K562 (cell line): ENCODE measurements at regions of chr1 and their contacts with region 1.

Region 1: GRCh38 chr1:169711469-169712281 is at the start of gene SELL:
- DNase-seq: peak; percentile 51 to 69 (median 62)
- ATAC-seq: peak; percentile 98
- H3K4me3 ChIP-seq: no peak within 1 kb of the TSS
- H3K27ac ChIP-seq: no peak within 1 kb of the TSS
- H3K4me1 ChIP-seq: no peaks in the 10 kb centered on the region
- H3K27me3 ChIP-seq: no peaks in the 10 kb centered on the region
- CTCF ChIP-seq: peak; percentile 77 to 82 (median 78)
- EP300 ChIP-seq: no peak
- POLR2A ChIP-seq: no peak
- RAD21 ChIP-seq: peak; percentile 77 to 78
- polyA plus RNA-seq, gene SELL: not detected

Region 2: DNA sequence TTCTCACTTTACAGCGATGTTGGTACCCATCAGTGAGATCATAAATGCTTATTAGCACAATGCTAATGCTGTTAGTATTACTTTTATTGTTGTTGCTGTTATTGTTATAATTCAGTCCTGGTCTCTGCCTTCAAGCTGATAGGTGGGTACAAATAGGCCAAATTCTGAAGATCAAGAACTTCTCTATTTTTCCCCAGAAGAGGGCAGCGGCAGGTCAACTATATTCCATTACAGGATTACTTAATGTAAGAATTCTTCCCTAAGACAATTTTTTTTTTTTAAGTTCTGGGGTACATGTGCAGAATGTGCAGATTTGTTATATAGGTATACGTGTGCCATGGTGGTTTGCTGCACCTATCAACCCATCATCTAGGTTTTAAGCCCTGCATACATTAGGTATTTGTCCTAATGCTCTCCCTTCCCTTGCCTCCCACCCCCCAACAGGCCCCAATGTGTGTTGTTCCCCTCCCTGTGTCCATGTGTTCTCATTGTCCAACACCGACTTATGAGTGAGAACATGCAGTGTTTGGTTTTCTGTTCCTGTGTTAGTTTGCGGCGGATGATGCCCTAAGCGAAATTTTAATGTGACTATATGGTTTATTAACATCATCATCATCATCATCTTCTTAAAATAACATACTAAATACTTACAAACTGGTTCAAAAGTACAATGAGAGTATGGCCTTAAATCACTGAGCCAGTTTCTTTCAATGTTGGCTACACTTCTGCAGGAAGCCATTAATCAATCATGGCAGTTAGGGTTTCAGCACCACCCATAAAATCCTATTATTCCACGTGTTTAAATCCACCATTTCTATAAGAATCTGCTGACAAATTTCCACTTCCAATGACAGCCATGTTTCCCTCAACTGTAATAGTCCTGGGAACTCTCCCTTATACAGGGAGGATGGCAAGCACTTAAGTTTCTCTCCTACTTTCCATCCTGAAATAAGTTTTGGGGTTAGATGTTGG is 245.1 kb before region 1 on chr1:
- CTCF ChIA-PET with region 1: interaction called, 5 read pairs
- POLR2A ChIA-PET with region 1: no interaction called
- in situ Hi-C with region 1: no loop called
- intact Hi-C with region 1: loop called (anchors 10 kb)
- DNase-seq: peak in 3 of 4 experiments; percentile 34 to 53 (median 42)
- ATAC-seq: peak; percentile 79
- H3K4me3 ChIP-seq: no peak overlapping the region
- H3K27ac ChIP-seq: no peak overlapping the region
- H3K4me1 ChIP-seq: no peaks in the 10 kb centered on the region
- H3K27me3 ChIP-seq: no peaks in the 10 kb centered on the region
- CTCF ChIP-seq: peak; percentile 39 to 66 (median 47); a peak in 5 of 6 replicates
- EP300 ChIP-seq: no peak
- POLR2A ChIP-seq: no peak
- RAD21 ChIP-seq: peak; percentile 70 to 79

Region 3: GRCh38 chr1:169513208-169513607 is 198.5 kb before region 1 on chr1:
- CTCF ChIA-PET with region 1: no interaction called
- POLR2A ChIA-PET with region 1: no interaction called
- in situ Hi-C with region 1: no loop called
- intact Hi-C with region 1: no loop called
- DNase-seq: no peak
- ATAC-seq: no peak
- H3K4me3 ChIP-seq: no peak overlapping the region
- H3K27ac ChIP-seq: no peak overlapping the region
- H3K4me1 ChIP-seq: peaks cover 0 to 10% of the 10 kb centered on the region in 2 experiments; a peak in 2 of 5 replicates
- H3K27me3 ChIP-seq: no peaks in the 10 kb centered on the region
- CTCF ChIP-seq: no peak
- EP300 ChIP-seq: no peak
- POLR2A ChIP-seq: no peak
- RAD21 ChIP-seq: no peak

Region 4: DNA sequence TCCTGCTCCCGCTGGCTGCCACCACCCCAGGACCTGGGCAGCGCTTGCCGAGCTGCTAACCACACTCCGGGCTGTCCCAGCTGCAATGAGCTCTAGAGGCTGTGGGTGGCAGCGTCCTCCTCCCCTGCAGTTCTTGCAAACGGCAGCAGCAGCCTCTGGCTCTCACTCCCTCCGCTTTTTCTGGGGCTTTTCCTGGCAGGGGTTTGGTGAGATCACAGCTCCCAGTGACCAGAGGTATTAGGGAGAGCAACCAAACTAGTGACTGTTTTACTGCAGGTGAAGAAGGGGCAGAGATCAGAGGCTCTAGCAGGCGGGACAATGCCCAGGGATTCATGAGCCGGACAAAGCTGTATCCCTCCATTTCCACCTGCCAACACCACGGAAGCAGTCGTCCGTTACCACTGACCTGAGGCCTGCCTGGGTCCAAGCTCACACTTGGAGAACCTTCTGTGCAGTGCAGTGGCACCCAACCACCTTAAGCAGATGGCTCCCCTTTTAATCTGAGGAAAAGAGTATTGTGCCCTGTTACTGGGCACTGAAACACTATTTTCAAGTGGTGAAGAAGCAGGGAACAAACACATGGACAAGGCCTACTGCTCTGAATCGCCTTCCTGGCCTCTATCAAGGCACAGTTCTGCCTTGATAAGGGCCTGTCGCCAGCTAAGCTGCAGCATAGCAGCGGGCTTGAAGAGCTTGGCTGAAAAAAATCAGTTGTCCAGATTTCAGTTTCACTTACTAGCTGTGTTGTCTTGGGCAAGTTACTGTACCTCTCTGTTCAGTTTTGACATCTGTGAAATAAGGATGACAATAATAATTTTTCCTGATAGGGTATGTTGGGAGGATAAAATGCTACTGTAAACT is 125.0 kb before region 1 on chr1 and contains the start of gene F5:
- CTCF ChIA-PET with region 1: no interaction called
- POLR2A ChIA-PET with region 1: no interaction called
- in situ Hi-C with region 1: no loop called
- intact Hi-C with region 1: loop called (anchors 5 kb)
- DNase-seq: peak; percentile 17 to 64 (median 38)
- ATAC-seq: peak; percentile 99
- H3K4me3 ChIP-seq: no peak within 1 kb of the TSS
- H3K27ac ChIP-seq: no peak within 1 kb of the TSS
- H3K4me1 ChIP-seq: peaks cover 0 to 4% of the 10 kb centered on the region in 2 experiments; a peak in 1 of 5 replicates
- H3K27me3 ChIP-seq: peaks cover 4 to 9% of the 10 kb centered on the region in 2 experiments; a peak in 1 of 5 replicates
- CTCF ChIP-seq: peak; percentile 58 to 73 (median 64)
- EP300 ChIP-seq: no peak
- POLR2A ChIP-seq: no peak
- RAD21 ChIP-seq: peak; percentile 40 to 70; a peak in 3 of 4 replicates
- polyA plus RNA-seq, gene F5: not detected

Region 5: GRCh38 chr1:169601093-169601881 is 110.4 kb before region 1 on chr1:
- CTCF ChIA-PET with region 1: interaction called, 8 read pairs
- POLR2A ChIA-PET with region 1: no interaction called
- in situ Hi-C with region 1: loop called (anchors 10 kb)
- intact Hi-C with region 1: loop called (anchors 1 kb)
- DNase-seq: peak; percentile 17 to 23 (median 19)
- ATAC-seq: peak; percentile 70
- H3K4me3 ChIP-seq: no peak overlapping the region
- H3K27ac ChIP-seq: no peak overlapping the region
- H3K4me1 ChIP-seq: no peaks in the 10 kb centered on the region
- H3K27me3 ChIP-seq: no peaks in the 10 kb centered on the region
- CTCF ChIP-seq: peak in 2 of 3 experiments; percentile 28 to 59; a peak in 3 of 6 replicates
- EP300 ChIP-seq: no peak
- POLR2A ChIP-seq: no peak
- RAD21 ChIP-seq: peak; percentile 77 to 79

Region 6: GRCh38 chr1:169809370-169810095 is 97.9 kb after region 1 on chr1:
- CTCF ChIA-PET with region 1: interaction called, 3 read pairs
- POLR2A ChIA-PET with region 1: no interaction called
- in situ Hi-C with region 1: no loop called
- intact Hi-C with region 1: loop called (anchors 2 kb)
- DNase-seq: peak; percentile 17 to 52 (median 43)
- ATAC-seq: peak; percentile 79
- H3K4me3 ChIP-seq: no peak overlapping the region
- H3K27ac ChIP-seq: no peak overlapping the region
- H3K4me1 ChIP-seq: no peaks in the 10 kb centered on the region
- H3K27me3 ChIP-seq: no peaks in the 10 kb centered on the region
- CTCF ChIP-seq: peak; percentile 29 to 72 (median 45); a peak in 4 of 6 replicates
- EP300 ChIP-seq: no peak
- POLR2A ChIP-seq: no peak
- RAD21 ChIP-seq: peak; percentile 62 to 67